ENCODE measurements at regions of chr14 and their contacts with region 1.

Region 1: DNA sequence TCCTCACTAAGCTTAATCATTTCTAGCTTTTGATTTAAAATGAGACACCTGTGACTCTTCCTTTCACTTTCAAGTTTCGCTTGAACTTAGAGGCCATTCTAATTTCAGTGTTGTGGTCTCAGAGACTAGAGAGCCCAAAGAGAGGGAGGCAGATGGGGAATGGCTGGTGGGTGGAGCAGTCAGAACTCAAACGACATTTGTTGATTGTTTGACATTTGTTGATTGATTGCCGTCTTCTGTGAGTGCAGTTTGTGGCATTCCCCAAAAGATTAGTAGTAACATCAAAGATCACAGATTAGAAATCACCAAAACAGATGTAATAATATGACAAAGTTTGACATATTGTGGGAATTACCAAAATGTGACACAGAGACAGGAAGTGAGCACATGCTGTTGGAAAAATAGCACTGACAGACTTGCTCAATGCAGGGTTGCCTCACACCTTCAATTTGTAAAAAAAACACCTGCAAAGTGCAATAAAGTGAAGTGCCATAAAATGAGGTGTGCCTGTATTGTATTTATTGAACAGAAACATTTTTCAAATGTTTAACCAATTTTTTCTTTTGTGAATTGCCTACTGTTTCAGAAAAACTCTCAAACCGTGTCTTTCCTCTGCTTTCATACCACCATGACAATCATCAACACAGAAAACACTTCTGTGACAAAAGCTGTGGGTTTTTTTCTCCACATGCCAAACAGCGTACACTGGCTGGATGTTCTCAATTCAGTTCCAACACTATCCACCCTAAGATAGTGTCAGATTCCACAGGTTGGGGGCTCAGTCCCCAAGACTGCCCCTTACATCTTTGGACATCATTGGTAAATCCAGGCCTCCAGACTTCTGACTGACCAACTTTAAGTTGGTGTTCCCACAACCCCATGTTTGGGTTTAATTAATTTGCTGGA is 376.3 kb upstream of the RGS6 start:
- DNase-seq: peak; percentile 8 to 81 (median 54)
- ATAC-seq: peak; percentile 92
- H3K4me3 ChIP-seq: peak overlapping the region; percentile 43
- H3K4me3 Mint-ChIP-seq: peak overlapping the region; percentile 70 to 88 (median 82)
- H3K27ac ChIP-seq: peak overlapping the region; percentile 82
- H3K27ac Mint-ChIP-seq: peak overlapping the region; percentile 91 to 99 (median 94)
- H3K4me1 ChIP-seq: peaks cover 30 to 43% of the 10 kb centered on the region in 2 donors
- H3K4me1 Mint-ChIP-seq: peaks cover 37 to 85% (median 68%) of the 10 kb centered on the region in 7 donors
- H3K27me3 ChIP-seq: no peaks in the 10 kb centered on the region
- H3K27me3 Mint-ChIP-seq: no peaks in the 10 kb centered on the region

Region 2: GRCh38 chr14:71403656-71404055 is 152.3 kb before region 1 on chr14:
- CTCF ChIA-PET with region 1: no interaction called
- POLR2A ChIA-PET with region 1: no interaction called
- intact Hi-C with region 1: loop called in 1 of 2 experiments (anchors 1 kb)
- DNase-seq: peak in 7 of 9 donors; percentile 31 to 64 (median 44)
- ATAC-seq: peak; percentile 51
- H3K4me3 ChIP-seq: no peak overlapping the region
- H3K4me3 Mint-ChIP-seq: no peak overlapping the region
- H3K27ac ChIP-seq: no peak overlapping the region
- H3K27ac Mint-ChIP-seq: peak overlapping the region in 6 of 9 donors; percentile 33 to 74 (median 56)
- H3K4me1 ChIP-seq: peaks cover 0 to 15% of the 10 kb centered on the region in 2 donors
- H3K4me1 Mint-ChIP-seq: peaks cover 17 to 47% (median 34%) of the 10 kb centered on the region in 7 donors
- H3K27me3 ChIP-seq: no peaks in the 10 kb centered on the region
- H3K27me3 Mint-ChIP-seq: no peaks in the 10 kb centered on the region

Region 3: DNA sequence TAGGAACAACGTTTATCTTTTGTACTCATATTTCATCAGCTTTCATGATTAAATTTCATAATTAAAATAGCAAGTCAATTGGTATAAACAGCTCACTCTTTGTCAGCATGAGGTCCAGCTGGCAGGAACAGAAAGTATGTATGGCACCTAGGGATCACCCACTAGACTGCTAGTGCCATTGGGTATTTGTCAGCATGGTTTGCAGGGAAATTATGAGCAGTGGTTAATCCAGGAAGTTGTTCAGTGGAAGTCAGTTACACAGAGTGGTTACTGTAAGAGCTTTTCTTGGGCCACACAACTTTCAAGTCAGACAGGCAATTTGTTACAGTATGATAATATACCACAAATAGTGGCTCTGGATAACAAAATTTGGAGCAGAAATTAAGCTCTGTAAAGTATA is 36.0 kb after region 1 on chr14:
- CTCF ChIA-PET with region 1: no interaction called
- POLR2A ChIA-PET with region 1: no interaction called
- intact Hi-C with region 1: loop called (anchors 2 to 5 kb)
- DNase-seq: peak in 1 of 9 donors; percentile 5
- ATAC-seq: peak; percentile 57
- H3K4me3 ChIP-seq: no peak overlapping the region
- H3K4me3 Mint-ChIP-seq: peak overlapping the region in 4 of 10 donors; percentile 13 to 45 (median 28)
- H3K27ac ChIP-seq: no peak overlapping the region
- H3K27ac Mint-ChIP-seq: peak overlapping the region in 7 of 9 donors; percentile 42 to 76 (median 54)
- H3K4me1 ChIP-seq: peaks cover 6 to 11% of the 10 kb centered on the region in 2 donors
- H3K4me1 Mint-ChIP-seq: peaks cover 20 to 72% (median 61%) of the 10 kb centered on the region in 7 donors
- H3K27me3 ChIP-seq: no peaks in the 10 kb centered on the region
- H3K27me3 Mint-ChIP-seq: no peaks in the 10 kb centered on the region

Region 4: GRCh38 chr14:71659161-71659560 is 103.3 kb after region 1 on chr14:
- CTCF ChIA-PET with region 1: no interaction called
- POLR2A ChIA-PET with region 1: no interaction called
- intact Hi-C with region 1: loop called in 1 of 2 experiments (anchors 5 kb)
- DNase-seq: no peak
- ATAC-seq: no peak
- H3K4me3 ChIP-seq: no peak overlapping the region
- H3K4me3 Mint-ChIP-seq: peak overlapping the region in 1 of 10 donors; percentile 34
- H3K27ac ChIP-seq: no peak overlapping the region
- H3K27ac Mint-ChIP-seq: peak overlapping the region in 1 of 9 donors; percentile 35
- H3K4me1 ChIP-seq: no peaks in the 10 kb centered on the region
- H3K4me1 Mint-ChIP-seq: peaks cover 0 to 20% (median 0%) of the 10 kb centered on the region in 7 donors
- H3K27me3 ChIP-seq: no peaks in the 10 kb centered on the region
- H3K27me3 Mint-ChIP-seq: no peaks in the 10 kb centered on the region

Measured in naive thymus-derived CD4-positive, alpha-beta T cell (primary cell).